ENCODE measurements at regions of chr14 and their contacts with region 1.

Region 1: GRCh38 chr14:68598621-68599447 is 194.0 kb downstream of the ZFP36L1 start:
- DNase-seq: peak; percentile 97
- ATAC-seq: peak; percentile 92
- H3K4me3 ChIP-seq: peak overlapping the region; percentile 60
- H3K27ac ChIP-seq: peak overlapping the region; percentile 99
- H3K4me1 ChIP-seq: peaks cover 27% of the 10 kb centered on the region
- H3K27me3 ChIP-seq: no peaks in the 10 kb centered on the region
- CTCF ChIP-seq: no peak

Region 2: DNA sequence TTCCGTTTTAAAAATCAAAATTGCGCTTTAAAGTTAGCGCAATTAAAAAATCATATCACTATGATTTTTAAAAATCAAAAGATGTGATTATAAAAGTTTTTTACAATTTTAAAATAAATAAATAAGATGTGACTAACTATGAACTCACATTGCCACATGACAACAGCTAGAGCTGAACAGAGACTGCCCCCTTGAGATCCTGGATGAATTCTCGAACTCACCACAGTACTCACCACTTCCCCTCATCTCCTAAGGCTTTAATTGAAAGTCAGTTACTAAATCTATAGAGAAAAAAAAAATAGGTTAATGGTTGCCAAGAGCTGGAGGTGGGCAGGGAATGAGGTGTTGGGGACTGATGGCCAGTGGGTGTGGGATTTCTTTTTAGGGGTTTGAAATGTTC is 190.2 kb before region 1 on chr14:
- CTCF ChIA-PET with region 1: no interaction called
- POLR2A ChIA-PET with region 1: no interaction called
- intact Hi-C with region 1: loop called (anchors 2 kb)
- DNase-seq: peak; percentile 63
- ATAC-seq: peak; percentile 59
- H3K4me3 ChIP-seq: no peak overlapping the region
- H3K27ac ChIP-seq: peak overlapping the region; percentile 22; the same call in 1 of the 2 replicates
- H3K4me1 ChIP-seq: peaks cover 56% of the 10 kb centered on the region
- H3K27me3 ChIP-seq: no peaks in the 10 kb centered on the region
- CTCF ChIP-seq: peak; percentile 63

Region 3: GRCh38 chr14:68426661-68427549 is 171.9 kb before region 1 on chr14:
- CTCF ChIA-PET with region 1: no interaction called
- POLR2A ChIA-PET with region 1: no interaction called
- intact Hi-C with region 1: loop called (anchors 5 kb)
- DNase-seq: peak; percentile 45
- ATAC-seq: peak; percentile 58
- H3K4me3 ChIP-seq: no peak overlapping the region
- H3K27ac ChIP-seq: peak overlapping the region; percentile 78
- H3K4me1 ChIP-seq: peaks cover 17% of the 10 kb centered on the region
- H3K27me3 ChIP-seq: no peaks in the 10 kb centered on the region
- CTCF ChIP-seq: no peak

Region 4: DNA sequence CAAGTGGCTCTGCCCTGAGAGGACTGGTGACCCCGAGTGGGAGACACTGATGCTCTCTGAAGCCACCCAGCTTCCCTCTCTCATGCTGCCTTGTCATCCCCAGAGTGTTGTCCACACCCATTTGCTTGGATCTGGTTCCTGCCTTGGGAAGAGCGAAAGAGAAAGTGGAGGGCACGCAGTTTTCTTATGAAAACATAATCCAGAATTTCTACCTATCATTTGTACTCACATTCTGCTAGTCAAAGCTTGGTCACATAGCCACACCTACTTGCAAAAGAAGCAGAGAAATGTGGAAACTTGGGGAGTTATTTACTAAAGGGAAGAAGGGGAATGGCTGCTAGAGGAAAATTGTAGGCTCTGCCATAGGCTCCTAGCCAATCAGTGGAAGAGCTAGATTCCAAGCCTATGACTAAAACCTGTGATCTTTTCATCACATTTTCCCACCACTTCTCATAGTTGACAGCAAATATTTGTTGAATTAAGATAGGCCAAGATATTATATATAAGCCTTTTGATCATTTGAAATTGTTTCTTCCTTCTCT is 132.3 kb before region 1 on chr14:
- CTCF ChIA-PET with region 1: no interaction called
- POLR2A ChIA-PET with region 1: no interaction called
- intact Hi-C with region 1: loop called (anchors 2 kb)
- DNase-seq: peak; percentile 96
- ATAC-seq: peak; percentile 34
- H3K4me3 ChIP-seq: no peak overlapping the region; the same call in 1 of the 2 replicates
- H3K27ac ChIP-seq: peak overlapping the region; percentile 55
- H3K4me1 ChIP-seq: peaks cover 59% of the 10 kb centered on the region
- H3K27me3 ChIP-seq: no peaks in the 10 kb centered on the region
- CTCF ChIP-seq: no peak

Region 5: GRCh38 chr14:68522510-68523325 is 76.1 kb before region 1 on chr14:
- CTCF ChIA-PET with region 1: no interaction called
- POLR2A ChIA-PET with region 1: no interaction called
- intact Hi-C with region 1: no loop called
- DNase-seq: no peak
- ATAC-seq: no peak
- H3K4me3 ChIP-seq: no peak overlapping the region
- H3K27ac ChIP-seq: no peak overlapping the region
- H3K4me1 ChIP-seq: peaks cover 28% of the 10 kb centered on the region
- H3K27me3 ChIP-seq: no peaks in the 10 kb centered on the region
- CTCF ChIP-seq: no peak

Region 6: GRCh38 chr14:68695326-68695768 is 96.5 kb after region 1 on chr14:
- CTCF ChIA-PET with region 1: no interaction called
- POLR2A ChIA-PET with region 1: interaction called, 7 read pairs
- intact Hi-C with region 1: loop called (anchors 2 kb)
- DNase-seq: peak; percentile 99
- ATAC-seq: peak; percentile 95
- H3K4me3 ChIP-seq: no peak overlapping the region
- H3K27ac ChIP-seq: peak overlapping the region; percentile 90
- H3K4me1 ChIP-seq: peaks cover 28% of the 10 kb centered on the region
- H3K27me3 ChIP-seq: no peaks in the 10 kb centered on the region
- CTCF ChIP-seq: no peak

Measured in PC-3 (cell line).